Caco-2 (cell line): ENCODE measurements at regions of chr2 and their contacts with region 1.

Region 1: DNA sequence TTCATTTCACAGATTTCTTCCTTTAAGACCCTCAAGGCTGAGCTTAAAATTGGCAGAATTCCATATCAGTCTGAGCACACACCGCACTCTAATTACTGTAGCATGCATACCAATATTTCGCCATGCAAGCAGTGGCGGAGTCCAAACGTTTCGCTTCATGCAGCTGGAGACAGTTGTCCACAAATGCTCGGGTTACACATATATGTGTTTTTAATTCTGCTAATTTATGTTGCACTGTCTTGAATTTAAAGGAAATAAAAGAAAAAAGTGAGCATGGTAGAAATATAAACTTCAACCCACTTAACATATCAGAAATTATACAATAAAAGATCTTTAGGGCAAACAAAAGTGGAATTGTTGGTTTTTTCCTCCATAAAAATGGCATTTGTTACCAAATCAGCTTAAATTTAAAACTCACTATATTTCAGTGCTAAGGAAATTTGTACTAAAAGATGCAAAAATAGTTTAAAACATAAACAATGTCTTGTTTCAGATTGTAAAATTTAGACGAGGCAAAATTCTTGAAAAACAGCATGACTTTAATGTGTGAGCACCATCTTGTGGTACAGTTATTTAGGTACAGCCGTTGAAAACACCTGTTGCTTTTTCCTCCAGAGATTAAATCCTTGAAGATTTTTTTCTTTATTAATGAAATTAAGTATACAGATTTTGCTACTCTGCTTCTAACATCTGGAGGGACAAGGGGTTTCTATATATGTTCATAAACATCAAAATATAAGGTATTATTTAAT is 24.1 kb upstream of the KANSL1L start:
- DNase-seq: peak in 1 of 2 experiments; percentile 17
- H3K4me3 ChIP-seq: no peak overlapping the region
- H3K4me3 Mint-ChIP-seq: no peak overlapping the region
- H3K27ac Mint-ChIP-seq: no peak overlapping the region
- H3K4me1 ChIP-seq: peaks cover 3% of the 10 kb centered on the region
- H3K4me1 Mint-ChIP-seq: no peaks in the 10 kb centered on the region
- H3K27me3 ChIP-seq: no peaks in the 10 kb centered on the region
- H3K27me3 Mint-ChIP-seq: no peaks in the 10 kb centered on the region
- CTCF ChIP-seq: peak; percentile 61 to 66

Region 2: GRCh38 chr2:209593930-209594329 is 601.3 kb before region 1 on chr2:
- CTCF ChIA-PET with region 1: no interaction called
- POLR2A ChIA-PET with region 1: no interaction called
- intact Hi-C with region 1: loop called (anchors 10 kb)
- DNase-seq: no peak
- H3K4me3 ChIP-seq: no peak overlapping the region
- H3K4me3 Mint-ChIP-seq: no peak overlapping the region
- H3K27ac Mint-ChIP-seq: no peak overlapping the region
- H3K4me1 ChIP-seq: no peaks in the 10 kb centered on the region
- H3K4me1 Mint-ChIP-seq: no peaks in the 10 kb centered on the region
- H3K27me3 ChIP-seq: no peaks in the 10 kb centered on the region
- H3K27me3 Mint-ChIP-seq: no peaks in the 10 kb centered on the region
- CTCF ChIP-seq: no peak

Region 3: DNA sequence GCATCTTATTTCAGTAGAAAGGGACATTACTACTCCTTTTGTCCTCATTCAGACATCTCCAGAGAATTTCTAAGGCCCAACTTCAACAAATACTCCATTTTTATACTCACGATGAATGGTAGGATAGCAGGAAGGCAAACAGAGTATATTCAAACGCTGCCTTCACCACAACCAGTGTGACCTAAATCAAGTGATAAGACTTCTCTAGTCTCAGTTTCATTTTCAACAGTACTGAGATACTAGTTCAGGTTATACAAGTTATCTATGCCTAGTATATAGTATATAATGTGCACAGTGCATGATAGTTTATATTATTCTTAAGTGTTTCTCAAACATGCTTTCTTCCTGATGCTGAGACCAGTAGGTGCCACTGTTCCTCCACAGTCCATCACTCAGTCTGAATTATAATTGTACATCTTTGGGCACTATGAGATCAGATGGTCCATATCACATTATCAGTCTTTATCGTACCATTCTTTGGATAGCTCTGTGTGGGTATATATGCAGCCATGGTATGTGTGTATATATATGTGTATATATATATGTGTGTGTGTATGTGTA is 259.1 kb before region 1 on chr2:
- CTCF ChIA-PET with region 1: no interaction called
- POLR2A ChIA-PET with region 1: no interaction called
- intact Hi-C with region 1: loop called (anchors 1 kb)
- DNase-seq: no peak
- H3K4me3 ChIP-seq: no peak overlapping the region
- H3K4me3 Mint-ChIP-seq: no peak overlapping the region
- H3K27ac Mint-ChIP-seq: no peak overlapping the region
- H3K4me1 ChIP-seq: no peaks in the 10 kb centered on the region
- H3K4me1 Mint-ChIP-seq: no peaks in the 10 kb centered on the region
- H3K27me3 ChIP-seq: no peaks in the 10 kb centered on the region
- H3K27me3 Mint-ChIP-seq: peaks cover 16% of the 10 kb centered on the region
- CTCF ChIP-seq: no peak

Region 4: GRCh38 chr2:209977386-209978239 is 217.7 kb before region 1 on chr2:
- CTCF ChIA-PET with region 1: interaction called, 7 read pairs
- POLR2A ChIA-PET with region 1: no interaction called
- intact Hi-C with region 1: loop called (anchors 1 kb)
- DNase-seq: peak in 1 of 2 experiments; percentile 36
- H3K4me3 ChIP-seq: no peak overlapping the region
- H3K4me3 Mint-ChIP-seq: no peak overlapping the region
- H3K27ac Mint-ChIP-seq: no peak overlapping the region
- H3K4me1 ChIP-seq: no peaks in the 10 kb centered on the region
- H3K4me1 Mint-ChIP-seq: no peaks in the 10 kb centered on the region
- H3K27me3 ChIP-seq: no peaks in the 10 kb centered on the region
- H3K27me3 Mint-ChIP-seq: peaks cover 9% of the 10 kb centered on the region
- CTCF ChIP-seq: peak; percentile 37 to 53

Region 5: DNA sequence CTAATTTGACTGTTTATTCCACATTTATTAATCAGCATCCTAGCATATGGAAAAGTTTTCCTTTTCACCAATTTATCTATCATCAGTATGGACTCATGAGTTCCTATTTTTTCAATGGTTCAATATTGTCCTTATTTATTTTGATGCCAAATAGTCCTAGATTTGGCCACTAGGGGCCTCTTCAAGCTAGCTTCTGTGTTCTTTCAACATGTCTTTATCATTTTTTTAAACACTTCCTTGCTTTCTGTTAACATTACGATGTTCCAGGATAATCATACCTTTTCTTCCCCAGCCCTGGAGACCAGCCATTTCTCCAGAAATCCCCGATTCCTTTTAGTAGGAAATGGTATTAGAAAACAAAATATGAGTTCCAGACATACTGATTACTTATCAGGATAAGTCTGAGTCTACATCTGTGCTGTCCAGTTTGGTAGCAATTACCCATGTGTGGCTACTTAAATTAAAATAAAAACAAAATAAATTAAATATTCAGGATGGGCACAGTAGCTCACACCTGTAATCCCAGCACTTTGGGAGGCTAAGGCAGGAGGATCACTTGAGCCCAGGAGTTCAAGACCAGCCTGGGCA is 122.3 kb before region 1 on chr2:
- CTCF ChIA-PET with region 1: interaction called, 6 read pairs
- POLR2A ChIA-PET with region 1: no interaction called
- intact Hi-C with region 1: loop called (anchors 1 kb)
- DNase-seq: peak in 1 of 2 experiments; percentile 26
- H3K4me3 ChIP-seq: no peak overlapping the region
- H3K4me3 Mint-ChIP-seq: no peak overlapping the region
- H3K27ac Mint-ChIP-seq: no peak overlapping the region
- H3K4me1 ChIP-seq: peaks cover 8% of the 10 kb centered on the region; the same call in 1 of the 2 replicates
- H3K4me1 Mint-ChIP-seq: peaks cover 6% of the 10 kb centered on the region
- H3K27me3 ChIP-seq: no peaks in the 10 kb centered on the region
- H3K27me3 Mint-ChIP-seq: no peaks in the 10 kb centered on the region
- CTCF ChIP-seq: peak; percentile 29 to 69

Region 6: DNA sequence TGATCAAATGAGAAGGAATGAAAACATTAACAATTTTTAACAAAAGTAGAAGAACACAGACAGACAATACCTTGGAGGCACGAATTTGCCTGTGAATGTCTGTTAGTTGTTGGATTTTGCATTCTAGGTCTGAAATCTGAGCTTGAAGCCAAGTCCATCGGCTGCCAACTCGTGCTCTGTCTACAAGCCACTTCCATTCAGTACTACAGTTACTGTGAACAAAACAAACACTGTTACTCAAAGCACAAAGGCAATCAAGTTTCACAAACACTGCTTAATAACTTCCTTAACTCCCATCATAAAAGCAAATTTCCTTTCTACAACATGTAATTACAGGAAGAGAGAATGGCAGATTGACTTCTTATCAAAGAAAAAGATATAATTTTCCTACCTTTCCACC is 66.3 kb before region 1 on chr2:
- CTCF ChIA-PET with region 1: no interaction called
- POLR2A ChIA-PET with region 1: no interaction called
- intact Hi-C with region 1: no loop called
- DNase-seq: no peak
- H3K4me3 ChIP-seq: no peak overlapping the region
- H3K4me3 Mint-ChIP-seq: no peak overlapping the region
- H3K27ac Mint-ChIP-seq: no peak overlapping the region
- H3K4me1 ChIP-seq: no peaks in the 10 kb centered on the region
- H3K4me1 Mint-ChIP-seq: no peaks in the 10 kb centered on the region
- H3K27me3 ChIP-seq: no peaks in the 10 kb centered on the region
- H3K27me3 Mint-ChIP-seq: no peaks in the 10 kb centered on the region
- CTCF ChIP-seq: no peak

Region 7: DNA sequence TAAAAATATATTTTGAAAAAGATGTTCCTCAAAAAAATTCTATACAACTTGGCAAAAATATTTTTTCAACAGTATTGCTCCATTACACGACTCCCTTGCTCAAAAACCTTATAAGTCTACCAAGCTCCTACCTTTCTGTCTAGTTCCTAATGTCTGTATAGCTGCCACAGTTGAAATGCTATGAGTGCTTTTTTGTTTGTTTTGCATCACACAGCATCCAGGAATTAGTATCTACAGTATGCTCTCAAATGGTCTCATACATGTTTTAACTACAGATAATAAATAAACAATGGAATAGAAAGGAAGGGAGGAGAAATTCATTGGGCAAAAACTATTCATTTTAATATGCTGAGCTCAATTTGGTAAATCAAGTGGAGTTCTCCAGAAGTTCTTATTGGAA is 12.7 kb after region 1 on chr2:
- CTCF ChIA-PET with region 1: no interaction called
- POLR2A ChIA-PET with region 1: no interaction called
- intact Hi-C with region 1: no loop called
- DNase-seq: no peak
- H3K4me3 ChIP-seq: no peak overlapping the region
- H3K4me3 Mint-ChIP-seq: no peak overlapping the region
- H3K27ac Mint-ChIP-seq: no peak overlapping the region
- H3K4me1 ChIP-seq: no peaks in the 10 kb centered on the region
- H3K4me1 Mint-ChIP-seq: no peaks in the 10 kb centered on the region
- H3K27me3 ChIP-seq: no peaks in the 10 kb centered on the region
- H3K27me3 Mint-ChIP-seq: peaks cover 8% of the 10 kb centered on the region
- CTCF ChIP-seq: no peak